ENCODE measurements at regions of chr10 and their contacts with region 1.

Region 1: DNA sequence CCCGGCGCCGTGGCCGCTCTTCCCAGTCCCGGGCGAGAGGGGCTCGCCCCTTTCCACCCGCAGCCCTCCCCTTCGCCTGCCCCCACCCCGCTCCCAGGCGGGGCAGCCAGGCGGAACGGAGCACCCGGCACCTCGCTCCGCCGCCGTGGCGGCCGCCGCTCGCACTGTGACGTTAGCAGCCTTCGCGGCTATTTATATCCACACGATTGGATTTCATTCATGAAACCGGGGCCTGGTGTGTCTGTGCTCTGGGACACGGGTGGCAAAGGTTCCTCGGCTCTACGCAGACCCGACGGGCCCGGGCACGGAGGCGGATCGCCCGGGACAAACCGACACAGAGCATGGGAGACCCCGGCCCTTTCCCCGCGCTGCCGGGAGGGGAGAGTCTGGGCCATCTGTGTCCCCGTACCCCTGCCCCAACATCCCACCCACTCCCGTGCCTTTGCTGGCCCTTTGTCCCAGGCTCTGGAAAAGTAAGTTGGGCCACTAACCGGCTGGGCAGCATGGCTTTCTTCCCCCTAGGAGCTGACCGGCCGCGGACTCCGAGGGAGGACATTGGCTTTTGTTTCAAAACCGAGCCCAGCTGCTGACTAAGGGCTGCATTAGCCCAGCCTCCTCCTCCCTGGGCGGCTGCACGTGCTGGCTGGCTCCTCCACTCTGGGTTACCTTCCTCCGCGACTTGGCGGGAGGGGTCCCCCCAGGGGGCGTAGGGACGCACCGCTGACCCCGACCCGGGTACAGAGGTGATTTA is at the start of gene RHOBTB1:
- DNase-seq: peak; percentile 53
- H3K4me3 ChIP-seq: peak within 1 kb of the TSS; percentile 53 to 68
- H3K27ac ChIP-seq: peak within 1 kb of the TSS; percentile 84 to 88
- H3K4me1 ChIP-seq: no peaks in the 10 kb centered on the region
- H3K27me3 ChIP-seq: no peaks in the 10 kb centered on the region
- CTCF ChIP-seq: no peak
- POLR2A ChIP-seq: peak; percentile 50
- total RNA-seq, gene RHOBTB1: 4.9 to 28.9 TPM

Region 2: GRCh38 chr10:60905580-60905979 is 38.8 kb before region 1 on chr10:
- intact Hi-C with region 1: loop called (anchors 5 kb)
- DNase-seq: no peak
- H3K4me3 ChIP-seq: no peak overlapping the region
- H3K27ac ChIP-seq: no peak overlapping the region
- H3K4me1 ChIP-seq: no peaks in the 10 kb centered on the region
- H3K27me3 ChIP-seq: no peaks in the 10 kb centered on the region
- CTCF ChIP-seq: no peak
- POLR2A ChIP-seq: no peak

Region 3: DNA sequence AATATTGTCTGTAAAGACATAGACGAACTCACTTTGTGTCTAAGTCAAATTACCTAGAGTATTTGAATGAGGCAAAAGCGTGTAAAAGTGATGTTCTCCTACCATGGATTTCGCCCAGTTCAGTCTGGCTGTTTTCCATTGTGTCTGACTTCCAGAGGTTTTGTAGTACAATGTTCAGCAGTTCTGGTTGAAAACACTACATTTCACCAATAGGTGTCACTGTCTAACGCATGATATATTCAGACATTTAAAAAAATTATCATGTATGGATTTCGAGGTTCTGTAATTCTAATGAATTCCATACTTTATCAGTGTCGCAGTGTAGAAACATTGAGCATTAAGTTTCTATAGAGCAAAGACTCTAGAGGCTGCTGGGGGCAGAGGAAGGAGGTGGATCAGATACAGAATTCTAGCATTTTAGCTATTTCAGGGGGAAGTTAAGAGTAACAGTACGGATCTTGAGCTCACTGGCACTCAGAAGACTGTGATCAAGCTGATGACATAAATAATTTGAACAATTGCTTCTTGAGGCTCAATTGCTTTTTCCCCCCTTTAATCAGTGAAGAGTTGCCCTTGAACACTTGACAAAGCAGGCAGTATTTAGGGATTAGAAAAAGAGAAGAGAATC is 196.5 kb after region 1 on chr10:
- intact Hi-C with region 1: no loop called
- DNase-seq: peak; percentile 58
- H3K4me3 ChIP-seq: no peak overlapping the region
- H3K27ac ChIP-seq: no peak overlapping the region
- H3K4me1 ChIP-seq: no peaks in the 10 kb centered on the region
- H3K27me3 ChIP-seq: no peaks in the 10 kb centered on the region
- CTCF ChIP-seq: peak; percentile 41 to 74 (median 67)
- POLR2A ChIP-seq: no peak

Measured in prostate gland (tissue), 2 donors.